Sigmoid colon (tissue), 7 donors: ENCODE measurements at regions of chr6 and their contacts with region 1.

Region 1: DNA sequence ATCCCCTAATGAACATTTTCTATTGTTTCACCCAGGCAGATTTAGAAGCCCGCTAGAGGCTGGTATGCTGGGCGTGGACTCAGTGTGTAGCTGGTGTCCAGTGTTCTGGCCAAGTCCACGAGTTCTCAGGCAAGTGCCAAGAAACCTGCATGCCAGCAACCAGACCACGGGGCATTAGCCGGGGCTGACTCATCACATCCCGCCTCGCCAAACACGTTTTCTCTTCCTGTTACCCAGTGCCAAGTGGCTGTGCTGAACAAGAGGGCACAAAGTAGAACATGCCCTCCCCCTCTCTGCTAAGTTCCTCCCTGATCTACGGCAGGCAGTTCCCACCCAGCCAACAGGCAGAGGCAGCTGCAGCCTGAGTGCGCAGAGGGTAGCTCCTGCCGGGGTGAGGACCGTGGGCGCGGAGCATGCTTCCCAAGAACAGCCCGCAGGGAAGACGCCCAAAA is 29.6 kb downstream of the RAMACL start:
- DNase-seq: peak; percentile 97
- H3K4me3 ChIP-seq: peak overlapping the region in 2 of 4 donors; percentile 14 to 21
- H3K27ac ChIP-seq: peak overlapping the region; percentile 66 to 85 (median 80)
- H3K4me1 ChIP-seq: peaks cover 0 to 52% (median 33%) of the 10 kb centered on the region in 4 donors
- H3K27me3 ChIP-seq: no peaks in the 10 kb centered on the region
- CTCF ChIP-seq: no peak
- EP300 ChIP-seq: peak in 2 of 4 donors; percentile 78 to 88
- POLR2A ChIP-seq: no peak

Region 2: GRCh38 chr6:166598441-166599138 is 41.7 kb after region 1 on chr6:
- intact Hi-C with region 1: loop called (anchors 5 kb)
- DNase-seq: peak; percentile 84
- H3K4me3 ChIP-seq: no peak overlapping the region
- H3K27ac ChIP-seq: peak overlapping the region; percentile 54 to 83 (median 68)
- H3K4me1 ChIP-seq: peaks cover 0 to 60% (median 42%) of the 10 kb centered on the region in 4 donors
- H3K27me3 ChIP-seq: no peaks in the 10 kb centered on the region
- CTCF ChIP-seq: no peak
- EP300 ChIP-seq: peak in 2 of 4 donors; percentile 9 to 68
- POLR2A ChIP-seq: no peak

Region 3: DNA sequence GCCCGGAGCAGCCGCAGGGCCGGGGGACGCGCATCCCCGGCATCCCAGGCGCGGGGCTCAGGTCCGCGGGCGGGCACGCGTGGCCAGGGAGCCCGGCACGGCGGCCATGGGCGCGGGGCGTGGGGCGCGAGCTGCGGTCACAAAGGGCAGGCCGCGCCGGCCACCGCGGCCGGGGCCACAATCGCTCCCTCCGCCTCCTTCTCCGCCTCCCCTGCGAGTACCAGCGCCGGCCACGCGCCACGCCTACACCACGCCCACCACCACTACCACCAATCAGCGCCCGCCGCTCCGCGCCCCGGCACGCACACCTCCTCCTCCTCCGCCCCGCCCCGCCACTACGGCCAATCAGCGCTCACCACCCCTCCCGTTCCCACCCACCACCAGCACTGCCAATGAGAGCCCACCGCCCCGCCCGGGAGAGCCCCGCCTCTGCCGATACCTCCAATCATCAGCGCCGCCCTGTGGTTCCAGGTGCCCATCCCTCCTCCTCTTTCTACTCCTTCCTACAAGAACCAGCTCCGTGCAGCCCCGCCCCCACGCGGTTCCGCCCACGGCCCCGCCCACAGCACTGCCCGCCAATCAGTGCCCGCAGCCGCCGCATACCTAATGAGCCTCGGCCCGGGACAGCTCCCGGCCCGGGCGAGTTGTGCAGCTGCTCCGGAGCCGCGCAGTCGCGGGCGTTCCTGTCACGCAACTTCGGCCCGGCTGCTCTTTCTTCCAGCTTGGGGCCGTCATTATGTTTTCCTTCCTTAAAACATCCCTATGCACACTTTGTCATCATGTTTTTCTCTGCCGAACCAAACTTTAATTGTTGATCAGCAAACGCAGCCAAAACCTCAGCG is 70.4 kb after region 1 on chr6 and contains the start of gene RPS6KA2:
- intact Hi-C with region 1: loop called (anchors 1 kb)
- DNase-seq: peak; percentile 100
- H3K4me3 ChIP-seq: peak within 1 kb of the TSS; percentile 52 to 92 (median 85)
- H3K27ac ChIP-seq: peak within 1 kb of the TSS; percentile 89 to 97 (median 93)
- H3K4me1 ChIP-seq: peaks cover 0 to 47% (median 33%) of the 10 kb centered on the region in 4 donors
- H3K27me3 ChIP-seq: no peaks in the 10 kb centered on the region
- CTCF ChIP-seq: no peak
- EP300 ChIP-seq: no peak
- POLR2A ChIP-seq: peak; percentile 82 to 88
- total RNA-seq, gene RPS6KA2: 27.8 to 44.7 (median 32.3) TPM